Naive thymus-derived CD4-positive, alpha-beta T cell (primary cell): ENCODE measurements at regions of chr1 and their contacts with region 1.

Region 1: GRCh38 chr1:46603858-46604549 is at the start of gene MKNK1:
- DNase-seq: peak; percentile 96 to 99 (median 99)
- ATAC-seq: peak; percentile 99
- H3K4me3 ChIP-seq: peak within 1 kb of the TSS; percentile 86
- H3K4me3 Mint-ChIP-seq: peak within 1 kb of the TSS; percentile 89 to 99 (median 94)
- H3K27ac ChIP-seq: peak within 1 kb of the TSS; percentile 75
- H3K27ac Mint-ChIP-seq: peak within 1 kb of the TSS; percentile 81 to 96 (median 93)
- H3K4me1 ChIP-seq: peaks cover 22 to 38% of the 10 kb centered on the region in 2 donors
- H3K4me1 Mint-ChIP-seq: peaks cover 53 to 76% (median 59%) of the 10 kb centered on the region in 7 donors
- H3K27me3 ChIP-seq: no peaks in the 10 kb centered on the region
- H3K27me3 Mint-ChIP-seq: no peaks in the 10 kb centered on the region
- total RNA-seq, gene MKNK1: 35.8 to 80.1 (median 54.1) TPM

Region 2: GRCh38 chr1:46303038-46303871 is 300.7 kb before region 1 on chr1 and contains the starts of genes LRRC41 and UQCRH:
- CTCF ChIA-PET with region 1: no interaction called
- POLR2A ChIA-PET with region 1: no interaction called
- intact Hi-C with region 1: loop called in 1 of 2 experiments (anchors 5 kb)
- DNase-seq: peak; percentile 91 to 96 (median 94)
- ATAC-seq: peak; percentile 94
- H3K4me3 ChIP-seq: peak within 1 kb of the TSS; percentile 83
- H3K4me3 Mint-ChIP-seq: peak within 1 kb of the TSS; percentile 94 to 99 (median 98)
- H3K27ac ChIP-seq: peak within 1 kb of the TSS; percentile 98
- H3K27ac Mint-ChIP-seq: peak within 1 kb of the TSS; percentile 95 to 99 (median 97)
- H3K4me1 ChIP-seq: peaks cover 19 to 37% of the 10 kb centered on the region in 2 donors
- H3K4me1 Mint-ChIP-seq: peaks cover 31 to 65% (median 46%) of the 10 kb centered on the region in 7 donors
- H3K27me3 ChIP-seq: no peaks in the 10 kb centered on the region
- H3K27me3 Mint-ChIP-seq: peaks cover 0 to 2% (median 0%) of the 10 kb centered on the region in 5 donors
- total RNA-seq, gene LRRC41: 34.4 to 50.5 (median 37.2) TPM
- total RNA-seq, gene UQCRH: 107 to 260 (median 127) TPM

Region 3: GRCh38 chr1:46581681-46582455 is 22.1 kb before region 1 on chr1:
- CTCF ChIA-PET with region 1: no interaction called
- POLR2A ChIA-PET with region 1: interaction called, 10 read pairs
- intact Hi-C with region 1: loop called in 1 of 2 experiments (anchors 1 kb)
- DNase-seq: peak in 1 of 9 donors; percentile 43
- ATAC-seq: peak; percentile 77
- H3K4me3 ChIP-seq: no peak overlapping the region
- H3K4me3 Mint-ChIP-seq: peak overlapping the region in 1 of 10 donors; percentile 83
- H3K27ac ChIP-seq: no peak overlapping the region
- H3K27ac Mint-ChIP-seq: peak overlapping the region in 4 of 9 donors; percentile 13 to 98 (median 59)
- H3K4me1 ChIP-seq: peaks cover 6 to 23% of the 10 kb centered on the region in 2 donors
- H3K4me1 Mint-ChIP-seq: peaks cover 5 to 55% (median 19%) of the 10 kb centered on the region in 7 donors
- H3K27me3 ChIP-seq: no peaks in the 10 kb centered on the region
- H3K27me3 Mint-ChIP-seq: no peaks in the 10 kb centered on the region

Region 4: GRCh38 chr1:46622344-46622743 is 18.3 kb after region 1 on chr1:
- CTCF ChIA-PET with region 1: interaction called, 5 read pairs
- POLR2A ChIA-PET with region 1: interaction called, 110 read pairs
- intact Hi-C with region 1: no loop called
- DNase-seq: no peak
- ATAC-seq: no peak
- H3K4me3 ChIP-seq: no peak overlapping the region
- H3K4me3 Mint-ChIP-seq: no peak overlapping the region
- H3K27ac ChIP-seq: no peak overlapping the region
- H3K27ac Mint-ChIP-seq: no peak overlapping the region
- H3K4me1 ChIP-seq: peaks cover 0 to under 1% of the 10 kb centered on the region in 2 donors
- H3K4me1 Mint-ChIP-seq: peaks cover 2 to 27% (median 5%) of the 10 kb centered on the region in 7 donors
- H3K27me3 ChIP-seq: no peaks in the 10 kb centered on the region
- H3K27me3 Mint-ChIP-seq: no peaks in the 10 kb centered on the region

Region 5: DNA sequence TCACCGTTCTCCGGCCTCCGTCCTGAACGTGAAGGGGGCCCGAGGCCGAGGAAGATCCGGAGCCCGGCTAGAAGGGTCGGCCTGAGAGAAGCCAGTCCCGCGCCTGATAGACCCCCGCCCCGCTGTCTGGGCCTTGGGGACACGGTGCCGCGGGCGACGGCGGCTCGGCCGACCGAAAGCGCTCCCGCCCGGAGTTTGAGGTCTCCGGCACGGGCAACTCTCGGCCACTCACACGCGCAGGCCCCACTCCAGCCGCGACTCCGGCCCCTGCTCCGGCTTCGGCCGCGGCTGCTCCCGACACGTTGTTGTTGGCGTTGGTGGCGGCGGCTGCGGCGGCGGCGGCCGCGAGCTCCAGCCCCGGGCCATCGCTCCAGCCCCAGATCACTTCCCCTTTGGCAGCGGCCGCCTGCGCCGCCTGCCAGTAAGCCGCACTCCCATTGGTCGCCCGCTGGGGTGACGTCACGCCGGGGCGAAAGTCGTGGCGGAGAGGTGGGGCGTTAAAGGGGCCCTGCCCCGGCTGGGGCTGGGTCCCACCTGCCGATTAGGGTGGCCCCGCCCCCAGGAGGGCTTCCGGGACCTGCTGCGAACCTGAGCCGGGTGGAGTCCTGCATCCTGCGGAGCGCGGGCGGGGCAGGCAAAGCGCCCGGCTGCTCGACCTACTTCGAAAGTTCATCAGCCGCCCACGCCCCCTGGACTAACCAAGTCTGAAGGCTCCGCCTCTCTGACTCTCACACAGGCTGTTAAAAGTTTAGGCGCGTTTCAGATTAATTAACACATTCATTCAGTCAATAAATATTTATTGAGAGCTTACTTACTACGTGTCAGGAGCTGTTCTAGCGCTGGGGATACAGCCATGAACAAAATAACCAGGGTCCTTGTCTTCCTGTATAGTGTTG is 115.0 kb after region 1 on chr1 and contains the start of gene EFCAB14:
- CTCF ChIA-PET with region 1: interaction called, 3 read pairs
- POLR2A ChIA-PET with region 1: interaction called, 7 read pairs
- intact Hi-C with region 1: loop called (anchors 1 kb)
- DNase-seq: peak; percentile 98 to 100 (median 100)
- ATAC-seq: peak; percentile 99
- H3K4me3 ChIP-seq: peak within 1 kb of the TSS; percentile 78
- H3K4me3 Mint-ChIP-seq: peak within 1 kb of the TSS; percentile 86 to 96 (median 91)
- H3K27ac ChIP-seq: peak within 1 kb of the TSS; percentile 91
- H3K27ac Mint-ChIP-seq: peak within 1 kb of the TSS; percentile 80 to 96 (median 93)
- H3K4me1 ChIP-seq: peaks cover 20 to 28% of the 10 kb centered on the region in 2 donors
- H3K4me1 Mint-ChIP-seq: peaks cover 38 to 52% (median 43%) of the 10 kb centered on the region in 7 donors
- H3K27me3 ChIP-seq: no peaks in the 10 kb centered on the region
- H3K27me3 Mint-ChIP-seq: no peaks in the 10 kb centered on the region
- total RNA-seq, gene EFCAB14: 64.5 to 98.2 (median 89.5) TPM